Activated CD4-positive, alpha-beta memory T cell treated with anti-CD3 and anti-CD28 coated beads for 36 hours (primary cell): ENCODE measurements at regions of chr20 and their contacts with region 1.

Region 1: GRCh38 chr20:21529863-21530262 is 16.0 kb upstream of the NKX2-2 start:
- DNase-seq: no peak
- H3K4me3 Mint-ChIP-seq: no peak overlapping the region
- H3K27ac Mint-ChIP-seq: no peak overlapping the region
- H3K4me1 Mint-ChIP-seq: peaks cover 6% of the 10 kb centered on the region
- H3K27me3 Mint-ChIP-seq: peaks cover 30% of the 10 kb centered on the region

Region 2: GRCh38 chr20:21548390-21549035 is 18.6 kb after region 1 on chr20:
- CTCF ChIA-PET with region 1: interaction called, 14 read pairs
- POLR2A ChIA-PET with region 1: interaction called, 3 read pairs
- intact Hi-C with region 1: no loop called
- DNase-seq: peak; percentile 74
- H3K4me3 Mint-ChIP-seq: peak overlapping the region; percentile 24
- H3K27ac Mint-ChIP-seq: peak overlapping the region; percentile 71
- H3K4me1 Mint-ChIP-seq: peaks cover 38% of the 10 kb centered on the region
- H3K27me3 Mint-ChIP-seq: no peaks in the 10 kb centered on the region

Region 3: GRCh38 chr20:21571841-21572690 is 42.2 kb after region 1 on chr20:
- CTCF ChIA-PET with region 1: interaction called, 109 read pairs
- POLR2A ChIA-PET with region 1: no interaction called
- intact Hi-C with region 1: loop called (anchors 1 kb)
- DNase-seq: peak; percentile 27
- H3K4me3 Mint-ChIP-seq: no peak overlapping the region
- H3K27ac Mint-ChIP-seq: no peak overlapping the region
- H3K4me1 Mint-ChIP-seq: peaks cover 11% of the 10 kb centered on the region
- H3K27me3 Mint-ChIP-seq: peaks cover 11% of the 10 kb centered on the region

Region 4: GRCh38 chr20:21577551-21577950 is 47.7 kb after region 1 on chr20:
- CTCF ChIA-PET with region 1: interaction called, 109 read pairs
- POLR2A ChIA-PET with region 1: no interaction called
- intact Hi-C with region 1: loop called (anchors 1 kb)
- DNase-seq: no peak
- H3K4me3 Mint-ChIP-seq: no peak overlapping the region
- H3K27ac Mint-ChIP-seq: no peak overlapping the region
- H3K4me1 Mint-ChIP-seq: no peaks in the 10 kb centered on the region
- H3K27me3 Mint-ChIP-seq: peaks cover 17% of the 10 kb centered on the region